Naive thymus-derived CD4-positive, alpha-beta T cell (primary cell): ENCODE measurements at regions of chr16 and their contacts with region 1.

Region 1: GRCh38 chr16:46883690-46884512 is at the start of gene GPT2:
- DNase-seq: peak; percentile 29 to 89 (median 57)
- ATAC-seq: peak; percentile 97
- H3K4me3 ChIP-seq: peak within 1 kb of the TSS; percentile 67
- H3K4me3 Mint-ChIP-seq: peak within 1 kb of the TSS; percentile 86 to 92 (median 89)
- H3K27ac ChIP-seq: no peak within 1 kb of the TSS
- H3K27ac Mint-ChIP-seq: peak within 1 kb of the TSS in 5 of 9 donors; percentile 25 to 82 (median 71)
- H3K4me1 ChIP-seq: peaks cover 0 to 3% of the 10 kb centered on the region in 2 donors
- H3K4me1 Mint-ChIP-seq: peaks cover 8 to 21% (median 16%) of the 10 kb centered on the region in 7 donors
- H3K27me3 ChIP-seq: no peaks in the 10 kb centered on the region
- H3K27me3 Mint-ChIP-seq: peaks cover 0 to 39% (median 6%) of the 10 kb centered on the region in 5 donors
- total RNA-seq, gene GPT2: 0.40 to 7.7 (median 0.73) TPM

Region 2: GRCh38 chr16:46763147-46763546 is 120.8 kb before region 1 on chr16:
- CTCF ChIA-PET with region 1: no interaction called
- POLR2A ChIA-PET with region 1: no interaction called
- intact Hi-C with region 1: no loop called
- DNase-seq: no peak
- ATAC-seq: no peak
- H3K4me3 ChIP-seq: no peak overlapping the region
- H3K4me3 Mint-ChIP-seq: no peak overlapping the region
- H3K27ac ChIP-seq: no peak overlapping the region
- H3K27ac Mint-ChIP-seq: no peak overlapping the region
- H3K4me1 ChIP-seq: no peaks in the 10 kb centered on the region
- H3K4me1 Mint-ChIP-seq: peaks cover 0 to 4% (median 0%) of the 10 kb centered on the region in 7 donors
- H3K27me3 ChIP-seq: no peaks in the 10 kb centered on the region
- H3K27me3 Mint-ChIP-seq: peaks cover 0 to 8% (median 0%) of the 10 kb centered on the region in 5 donors

Region 3: GRCh38 chr16:46908540-46909372 is 24.9 kb after region 1 on chr16:
- CTCF ChIA-PET with region 1: interaction called, 4 read pairs
- POLR2A ChIA-PET with region 1: no interaction called
- intact Hi-C with region 1: loop called in 1 of 2 experiments (anchors 2 kb)
- DNase-seq: peak; percentile 23 to 57 (median 47)
- ATAC-seq: peak; percentile 60
- H3K4me3 ChIP-seq: no peak overlapping the region
- H3K4me3 Mint-ChIP-seq: no peak overlapping the region
- H3K27ac ChIP-seq: no peak overlapping the region
- H3K27ac Mint-ChIP-seq: peak overlapping the region in 1 of 9 donors; percentile 35
- H3K4me1 ChIP-seq: no peaks in the 10 kb centered on the region
- H3K4me1 Mint-ChIP-seq: peaks cover 0 to 17% (median 0%) of the 10 kb centered on the region in 7 donors
- H3K27me3 ChIP-seq: no peaks in the 10 kb centered on the region
- H3K27me3 Mint-ChIP-seq: no peaks in the 10 kb centered on the region

Region 4: DNA sequence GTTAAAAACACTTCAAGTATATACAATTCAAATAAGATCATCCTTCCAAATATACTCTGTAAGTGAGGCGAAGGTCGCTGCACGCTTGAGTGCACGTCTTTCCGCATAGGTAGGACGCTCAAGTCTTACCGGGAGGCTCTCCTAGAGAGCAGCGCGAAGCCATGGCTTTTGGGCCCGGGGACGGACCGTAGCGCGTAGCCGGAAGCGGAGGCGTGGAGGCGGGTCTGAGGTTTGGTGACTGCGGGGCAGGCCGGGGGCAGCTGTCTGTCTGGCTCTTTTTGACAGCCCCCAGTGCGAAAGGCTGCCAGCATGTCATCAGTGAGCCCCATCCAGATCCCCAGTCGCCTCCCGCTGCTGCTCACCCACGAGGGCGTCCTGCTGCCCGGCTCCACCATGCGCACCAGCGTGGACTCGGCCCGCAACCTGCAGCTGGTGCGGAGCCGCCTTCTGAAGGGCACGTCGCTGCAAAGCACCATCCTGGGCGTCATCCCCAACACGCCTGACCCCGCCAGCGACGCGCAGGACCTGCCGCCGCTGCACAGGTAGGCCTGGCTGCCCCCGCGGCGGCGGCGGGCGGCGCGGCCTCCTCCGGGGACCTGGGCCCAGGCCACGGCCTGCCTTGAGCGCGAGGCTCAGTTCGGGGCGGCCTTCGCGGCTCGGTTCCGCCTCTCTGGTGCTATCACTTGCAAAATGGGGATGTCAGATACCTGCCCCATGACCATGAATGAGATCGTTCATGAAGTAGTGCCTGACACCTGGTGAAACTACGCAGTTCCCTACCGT is 1360.4 kb after region 1 on chr16 and contains the start of gene LONP2:
- CTCF ChIA-PET with region 1: no interaction called
- POLR2A ChIA-PET with region 1: no interaction called
- intact Hi-C with region 1: loop called in 1 of 2 experiments (anchors 5 kb)
- DNase-seq: peak; percentile 79 to 97 (median 93)
- ATAC-seq: peak; percentile 99
- H3K4me3 ChIP-seq: peak within 1 kb of the TSS; percentile 78
- H3K4me3 Mint-ChIP-seq: peak within 1 kb of the TSS; percentile 93 to 100 (median 96)
- H3K27ac ChIP-seq: peak within 1 kb of the TSS; percentile 78
- H3K27ac Mint-ChIP-seq: peak within 1 kb of the TSS; percentile 89 to 98 (median 96)
- H3K4me1 ChIP-seq: peaks cover 25 to 27% of the 10 kb centered on the region in 2 donors
- H3K4me1 Mint-ChIP-seq: peaks cover 29 to 56% (median 45%) of the 10 kb centered on the region in 7 donors
- H3K27me3 ChIP-seq: no peaks in the 10 kb centered on the region
- H3K27me3 Mint-ChIP-seq: no peaks in the 10 kb centered on the region
- total RNA-seq, gene LONP2: 62.3 to 124 (median 83.0) TPM